ENCODE measurements at regions of chr18 and their contacts with region 1.

Region 1: GRCh38 chr18:24362758-24363157 is 34.9 kb downstream of the OSBPL1A start:
- DNase-seq: no peak
- H3K4me3 ChIP-seq: no peak overlapping the region
- H3K27ac ChIP-seq: no peak overlapping the region
- H3K4me1 ChIP-seq: no peaks in the 10 kb centered on the region
- H3K27me3 ChIP-seq: no peaks in the 10 kb centered on the region
- CTCF ChIP-seq: no peak
- POLR2A ChIP-seq: no peak

Region 2: GRCh38 chr18:24246143-24246542 is 116.6 kb before region 1 on chr18:
- intact Hi-C with region 1: no loop called
- DNase-seq: no peak
- H3K4me3 ChIP-seq: no peak overlapping the region
- H3K27ac ChIP-seq: no peak overlapping the region
- H3K4me1 ChIP-seq: peaks cover 0 to 5% of the 10 kb centered on the region in 2 donors
- H3K27me3 ChIP-seq: no peaks in the 10 kb centered on the region
- CTCF ChIP-seq: no peak
- POLR2A ChIP-seq: no peak

Region 3: GRCh38 chr18:24488824-24489493 is 126.2 kb after region 1 on chr18:
- intact Hi-C with region 1: loop called (anchors 5 kb)
- DNase-seq: no peak
- H3K4me3 ChIP-seq: no peak overlapping the region
- H3K27ac ChIP-seq: no peak overlapping the region
- H3K4me1 ChIP-seq: peaks cover 3 to 6% of the 10 kb centered on the region in 2 donors
- H3K27me3 ChIP-seq: no peaks in the 10 kb centered on the region
- CTCF ChIP-seq: peak; percentile 53 to 79 (median 76)
- POLR2A ChIP-seq: no peak